CD8-positive, alpha-beta T cell (primary cell): ENCODE measurements at regions of chr3 and their contacts with region 1.

Region 1: DNA sequence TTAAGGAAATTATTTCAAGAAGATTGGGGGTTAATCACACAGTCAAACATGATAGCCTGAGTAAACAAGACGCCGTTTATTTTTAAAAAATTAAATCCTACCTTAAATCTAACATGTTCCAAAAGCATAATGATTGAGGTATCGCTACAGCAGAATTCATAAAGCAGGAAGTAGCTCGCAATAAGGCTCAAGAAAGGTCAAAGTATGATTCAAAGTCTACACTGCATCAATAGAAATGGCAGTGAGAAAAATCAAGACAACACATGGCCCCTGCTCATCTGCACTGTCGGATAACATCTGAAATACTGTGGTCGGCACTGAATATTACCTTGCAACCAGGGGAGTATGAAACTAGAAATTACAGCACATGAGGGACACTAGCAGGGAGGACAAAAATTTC is 93.2 kb downstream of the SMARCC1 start:
- DNase-seq: no peak
- ATAC-seq: no peak
- H3K4me3 ChIP-seq: no peak overlapping the region
- H3K4me3 Mint-ChIP-seq: no peak overlapping the region
- H3K27ac ChIP-seq: no peak overlapping the region
- H3K27ac Mint-ChIP-seq: no peak overlapping the region
- H3K4me1 ChIP-seq: no peaks in the 10 kb centered on the region
- H3K4me1 Mint-ChIP-seq: no peaks in the 10 kb centered on the region
- H3K27me3 ChIP-seq: no peaks in the 10 kb centered on the region
- H3K27me3 Mint-ChIP-seq: no peaks in the 10 kb centered on the region
- CTCF ChIP-seq: no peak

Region 2: GRCh38 chr3:47712398-47712797 is 23.9 kb after region 1 on chr3:
- CTCF ChIA-PET with region 1: no interaction called
- POLR2A ChIA-PET with region 1: no interaction called
- intact Hi-C with region 1: loop called in 1 of 2 experiments (anchors 1 kb)
- DNase-seq: no peak
- ATAC-seq: no peak
- H3K4me3 ChIP-seq: no peak overlapping the region
- H3K4me3 Mint-ChIP-seq: no peak overlapping the region
- H3K27ac ChIP-seq: no peak overlapping the region
- H3K27ac Mint-ChIP-seq: no peak overlapping the region
- H3K4me1 ChIP-seq: no peaks in the 10 kb centered on the region
- H3K4me1 Mint-ChIP-seq: peaks cover 1% of the 10 kb centered on the region
- H3K27me3 ChIP-seq: no peaks in the 10 kb centered on the region
- H3K27me3 Mint-ChIP-seq: no peaks in the 10 kb centered on the region
- CTCF ChIP-seq: no peak